CD4-positive, alpha-beta memory T cell (primary cell): ENCODE measurements at regions of chr16 and their contacts with region 1.

Region 1: DNA sequence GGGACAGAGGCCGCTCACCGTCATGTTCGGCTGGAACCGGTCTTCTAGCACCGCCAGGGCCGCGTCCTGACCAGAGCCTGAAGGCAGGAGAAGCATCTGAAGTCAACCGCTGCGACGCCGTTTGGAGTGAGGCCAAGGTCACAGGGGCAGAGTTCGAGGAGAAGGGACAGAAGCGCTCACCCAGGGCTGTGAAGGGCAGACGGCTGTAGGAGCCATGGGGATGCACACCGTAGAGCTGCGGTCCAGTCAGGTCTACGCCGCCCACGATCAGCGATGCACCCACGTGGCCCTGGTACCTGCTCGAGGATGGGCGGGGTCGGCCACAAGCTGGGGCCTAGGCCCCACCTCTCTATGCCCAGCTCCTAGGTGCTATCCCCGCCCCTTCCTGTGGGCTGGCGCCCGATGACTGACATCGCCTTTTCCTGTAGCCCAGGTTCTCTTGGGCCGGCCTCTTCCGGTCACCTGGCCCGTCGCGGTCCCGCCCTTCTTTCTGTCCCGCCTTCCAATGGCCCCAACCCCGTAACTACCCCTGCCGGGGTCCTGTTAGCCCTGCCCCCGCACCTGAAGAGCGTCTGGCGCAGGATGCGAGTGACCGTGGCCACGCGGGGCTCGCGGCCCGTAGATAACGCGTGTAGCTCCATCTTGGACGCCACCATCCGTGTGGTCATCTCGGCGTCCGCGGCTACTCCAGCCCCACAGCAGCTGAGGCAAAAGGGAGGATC is 1.1 kb downstream of the PSMB10 start:
- DNase-seq: peak; percentile 91 to 99 (median 95)
- H3K4me3 ChIP-seq: peak overlapping the region; percentile 81 to 98
- H3K4me3 Mint-ChIP-seq: peak overlapping the region; percentile 96 to 100 (median 99)
- H3K27ac ChIP-seq: peak overlapping the region; percentile 81
- H3K27ac Mint-ChIP-seq: peak overlapping the region; percentile 96 to 99 (median 98)
- H3K4me1 ChIP-seq: peaks cover 35% of the 10 kb centered on the region
- H3K4me1 Mint-ChIP-seq: peaks cover 21 to 50% (median 40%) of the 10 kb centered on the region in 4 donors
- H3K27me3 ChIP-seq: no peaks in the 10 kb centered on the region
- H3K27me3 Mint-ChIP-seq: no peaks in the 10 kb centered on the region

Region 2: DNA sequence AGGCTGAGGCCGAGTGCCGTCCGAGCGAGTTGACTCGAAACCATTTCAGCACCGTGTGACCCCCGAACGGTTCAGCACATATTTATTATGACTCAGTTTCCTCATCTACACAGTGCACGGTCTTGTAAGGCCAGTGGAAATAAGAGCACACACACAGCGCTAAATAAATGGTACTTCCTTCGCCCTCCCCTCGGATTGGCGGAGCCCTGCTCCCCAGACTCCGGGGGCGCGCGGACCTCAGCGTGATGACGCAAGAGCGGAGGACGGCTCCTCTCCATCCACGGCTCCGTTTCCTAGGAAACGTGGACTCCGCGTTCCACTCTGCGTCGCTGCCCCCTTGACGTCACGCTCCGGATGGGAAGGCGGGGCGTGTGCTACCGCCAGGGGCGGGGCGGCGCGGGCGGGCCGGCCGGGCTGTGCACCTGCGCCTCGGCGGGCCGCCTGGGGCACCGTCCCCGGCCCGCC is 275.0 kb before region 1 on chr16 and contains the start of gene PARD6A:
- CTCF ChIA-PET with region 1: no interaction called
- POLR2A ChIA-PET with region 1: interaction called, 10 read pairs
- intact Hi-C with region 1: no loop called
- DNase-seq: peak; percentile 94 to 97 (median 96)
- H3K4me3 ChIP-seq: peak within 1 kb of the TSS; percentile 98 to 100
- H3K4me3 Mint-ChIP-seq: peak within 1 kb of the TSS; percentile 93 to 98 (median 95)
- H3K27ac ChIP-seq: peak within 1 kb of the TSS; percentile 98
- H3K27ac Mint-ChIP-seq: peak within 1 kb of the TSS; percentile 97 to 99 (median 98)
- H3K4me1 ChIP-seq: peaks cover 27% of the 10 kb centered on the region
- H3K4me1 Mint-ChIP-seq: peaks cover 10 to 48% (median 20%) of the 10 kb centered on the region in 4 donors
- H3K27me3 ChIP-seq: no peaks in the 10 kb centered on the region
- H3K27me3 Mint-ChIP-seq: no peaks in the 10 kb centered on the region
- total RNA-seq, gene PARD6A: 7.4 to 8.8 TPM

Region 3: DNA sequence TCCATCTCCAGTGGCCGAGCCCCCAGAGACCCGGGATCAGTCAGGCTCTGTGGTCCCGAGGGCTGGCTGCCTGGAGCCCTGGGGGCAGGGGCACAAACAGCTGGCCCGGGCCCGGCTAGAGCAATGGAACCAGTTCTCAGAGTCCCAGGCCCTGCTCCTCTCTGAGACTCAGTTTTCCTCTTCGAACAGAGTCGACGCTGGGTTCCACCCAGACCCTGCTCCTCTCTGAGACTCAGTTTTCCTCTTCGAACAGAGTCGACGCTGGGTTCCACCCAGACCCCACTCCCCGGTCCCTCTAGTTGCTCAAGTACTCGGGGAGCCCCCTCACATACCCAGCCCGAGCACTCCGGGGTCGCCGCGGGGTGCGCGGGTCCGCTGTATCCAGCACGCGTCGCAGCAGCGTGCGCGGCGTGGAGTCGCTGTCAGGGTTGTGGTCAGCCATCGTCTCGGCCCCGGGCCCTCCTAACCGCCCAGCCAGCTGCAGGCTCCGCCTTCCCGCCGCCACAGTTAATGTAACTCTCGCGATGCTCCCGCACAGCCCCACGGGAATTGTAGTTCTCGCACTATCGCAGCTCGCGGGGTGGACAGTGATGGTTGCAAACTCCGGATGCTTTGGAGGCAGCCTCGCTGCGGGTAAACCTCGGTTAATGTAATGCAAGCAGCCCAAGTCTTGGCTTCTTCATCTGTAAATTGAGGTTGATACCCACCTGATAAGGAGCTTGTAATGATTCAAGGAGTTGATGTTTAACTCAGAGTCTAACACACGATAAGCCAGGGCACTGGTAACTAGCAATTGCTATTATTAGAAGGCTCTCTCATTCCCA is 101.9 kb before region 1 on chr16:
- CTCF ChIA-PET with region 1: interaction called, 6 read pairs
- POLR2A ChIA-PET with region 1: interaction called, 16 read pairs
- intact Hi-C with region 1: no loop called
- DNase-seq: peak; percentile 90 to 94 (median 91)
- H3K4me3 ChIP-seq: peak overlapping the region; percentile 53 to 74
- H3K4me3 Mint-ChIP-seq: peak overlapping the region; percentile 87 to 95 (median 91)
- H3K27ac ChIP-seq: peak overlapping the region; percentile 60
- H3K27ac Mint-ChIP-seq: peak overlapping the region; percentile 80 to 91 (median 85)
- H3K4me1 ChIP-seq: peaks cover 16% of the 10 kb centered on the region
- H3K4me1 Mint-ChIP-seq: peaks cover 10 to 21% (median 15%) of the 10 kb centered on the region in 4 donors
- H3K27me3 ChIP-seq: no peaks in the 10 kb centered on the region
- H3K27me3 Mint-ChIP-seq: no peaks in the 10 kb centered on the region

Region 4: DNA sequence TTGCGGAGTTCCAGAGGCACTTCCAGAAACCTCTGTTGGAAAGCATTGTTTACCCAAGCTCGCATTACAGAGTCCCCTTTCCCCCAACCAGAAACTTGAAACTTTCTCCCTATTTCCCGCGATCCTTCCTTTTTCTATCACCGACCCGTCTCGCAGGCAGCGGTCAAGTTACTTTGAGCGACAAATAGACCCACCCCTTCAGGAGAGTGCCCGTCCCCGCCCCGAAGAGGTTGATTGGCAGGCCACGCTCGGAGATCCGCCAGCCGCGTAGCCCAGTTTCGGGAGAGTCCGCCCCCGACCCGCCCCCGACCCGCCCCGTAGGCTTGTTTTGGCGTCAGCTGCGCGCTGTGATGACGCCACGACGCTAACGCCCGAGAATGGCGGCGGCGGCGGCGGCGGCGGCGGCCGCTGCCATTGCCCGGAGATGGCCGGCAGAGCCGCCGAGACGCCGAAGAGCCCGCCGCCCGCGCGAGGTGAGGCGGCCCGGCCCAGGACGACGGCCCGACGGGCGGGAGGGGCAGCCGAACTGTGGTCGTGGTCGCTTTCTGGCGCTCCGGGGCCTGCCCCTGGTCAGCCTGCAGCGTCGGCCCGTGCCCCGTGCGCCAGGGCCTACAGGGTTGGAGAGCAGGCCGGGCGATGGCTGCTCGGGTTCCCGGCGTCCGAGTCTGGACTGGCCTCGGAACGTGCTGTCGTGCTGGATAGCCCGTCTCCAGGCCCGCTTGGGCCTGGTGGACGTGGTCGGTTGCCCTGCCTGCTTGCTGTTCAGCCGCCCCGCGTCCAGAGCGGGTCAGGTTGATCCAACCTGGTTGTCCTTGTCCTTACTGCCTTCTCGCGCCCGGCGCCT is 42.4 kb before region 1 on chr16 and contains the start of gene PSKH1:
- CTCF ChIA-PET with region 1: no interaction called
- POLR2A ChIA-PET with region 1: interaction called, 28 read pairs
- intact Hi-C with region 1: loop called (anchors 1 kb)
- DNase-seq: peak; percentile 86 to 95 (median 87)
- H3K4me3 ChIP-seq: peak within 1 kb of the TSS; percentile 76 to 90
- H3K4me3 Mint-ChIP-seq: peak within 1 kb of the TSS; percentile 89 to 98 (median 96)
- H3K27ac ChIP-seq: peak within 1 kb of the TSS; percentile 95
- H3K27ac Mint-ChIP-seq: peak within 1 kb of the TSS; percentile 96 to 98 (median 97)
- H3K4me1 ChIP-seq: peaks cover 20% of the 10 kb centered on the region
- H3K4me1 Mint-ChIP-seq: peaks cover 12 to 48% (median 39%) of the 10 kb centered on the region in 4 donors
- H3K27me3 ChIP-seq: no peaks in the 10 kb centered on the region
- H3K27me3 Mint-ChIP-seq: no peaks in the 10 kb centered on the region
- total RNA-seq, gene PSKH1: 22.3 to 25.1 TPM

Region 5: DNA sequence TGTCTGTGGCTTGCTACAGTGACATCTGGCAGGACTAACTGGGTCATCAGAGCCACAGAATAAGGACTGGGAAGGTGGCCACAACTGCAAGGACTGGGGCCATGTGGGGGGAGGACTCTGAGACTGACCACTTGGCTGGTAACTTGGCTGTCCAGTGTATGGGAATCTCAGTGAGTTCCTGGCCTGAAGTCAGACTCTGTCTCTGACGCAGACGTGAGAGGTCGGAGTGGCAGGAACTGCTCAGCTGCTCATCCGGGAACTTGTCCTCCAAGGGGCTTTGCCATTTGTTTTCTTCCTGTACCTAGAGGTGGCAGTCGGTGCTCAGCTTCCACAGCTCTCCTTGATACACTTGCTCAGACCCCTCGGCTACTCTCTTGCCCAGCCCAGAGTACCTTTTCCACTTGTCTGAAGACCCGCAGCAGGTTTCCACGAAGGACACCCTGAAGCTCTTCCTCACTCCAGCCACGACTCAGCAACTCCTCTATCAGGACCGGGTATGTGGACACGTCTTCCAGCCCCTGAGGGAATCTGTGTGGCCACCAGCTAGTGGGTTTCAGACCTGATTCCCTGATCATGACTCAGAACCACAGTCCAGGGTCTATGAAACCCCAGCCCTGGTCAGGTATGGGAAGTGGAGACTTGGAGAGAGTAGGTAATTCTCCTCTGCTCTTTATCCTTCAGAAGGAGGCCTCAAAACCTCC is 52.0 kb after region 1 on chr16:
- CTCF ChIA-PET with region 1: interaction called, 3 read pairs
- POLR2A ChIA-PET with region 1: interaction called, 22 read pairs
- intact Hi-C with region 1: loop called (anchors 2 kb)
- DNase-seq: no peak
- H3K4me3 ChIP-seq: no peak overlapping the region
- H3K4me3 Mint-ChIP-seq: no peak overlapping the region
- H3K27ac ChIP-seq: no peak overlapping the region
- H3K27ac Mint-ChIP-seq: peak overlapping the region; percentile 31 to 84 (median 68)
- H3K4me1 ChIP-seq: peaks cover 27% of the 10 kb centered on the region
- H3K4me1 Mint-ChIP-seq: peaks cover 13 to 35% (median 22%) of the 10 kb centered on the region in 4 donors
- H3K27me3 ChIP-seq: no peaks in the 10 kb centered on the region
- H3K27me3 Mint-ChIP-seq: no peaks in the 10 kb centered on the region

Region 6: DNA sequence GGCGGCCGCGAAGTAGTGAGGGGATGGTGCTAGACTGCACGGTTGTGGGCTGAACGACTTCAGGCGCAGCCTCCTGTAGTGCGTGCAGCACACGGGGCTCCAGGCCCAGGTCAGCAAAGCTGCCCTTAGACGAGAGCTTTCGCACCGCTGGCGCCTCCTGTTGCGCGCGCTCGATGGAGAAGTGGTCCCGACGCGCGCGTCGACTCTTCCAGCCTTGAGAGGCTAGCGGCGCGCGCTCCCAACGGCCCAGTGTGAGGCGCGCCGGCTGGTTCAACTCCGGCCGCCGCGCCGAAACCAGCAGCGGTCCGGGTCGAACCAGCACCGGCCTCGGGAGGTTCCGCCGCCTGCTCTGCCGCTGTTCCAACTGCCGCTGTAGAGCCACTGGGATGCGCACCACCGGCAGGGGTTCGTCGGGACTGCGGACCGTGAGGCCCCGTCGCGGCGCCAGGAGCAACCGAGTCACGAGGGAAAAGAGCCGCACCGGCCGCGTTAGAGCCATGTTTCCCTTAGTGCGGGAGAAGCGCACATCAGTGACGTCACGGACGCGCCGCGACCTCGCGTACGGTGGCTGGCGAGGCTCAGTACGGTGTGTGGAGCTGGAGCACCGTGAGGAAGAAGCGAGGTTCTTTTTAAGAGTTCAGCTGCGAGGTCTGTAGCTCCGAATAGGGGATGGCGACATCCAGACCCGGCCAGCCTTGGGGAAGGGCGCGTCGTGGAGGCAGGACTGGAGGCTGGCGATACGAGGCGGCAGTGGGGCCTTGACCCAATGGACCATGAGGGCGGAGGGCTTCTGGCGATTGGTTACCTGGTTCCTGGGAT is 87.3 kb after region 1 on chr16 and contains the starts of genes DDX28 and DUS2:
- CTCF ChIA-PET with region 1: no interaction called
- POLR2A ChIA-PET with region 1: interaction called, 22 read pairs
- intact Hi-C with region 1: no loop called
- DNase-seq: peak; percentile 92 to 95 (median 92)
- H3K4me3 ChIP-seq: peak within 1 kb of the TSS; percentile 57 to 87
- H3K4me3 Mint-ChIP-seq: peak within 1 kb of the TSS; percentile 93 to 100 (median 97)
- H3K27ac ChIP-seq: peak within 1 kb of the TSS; percentile 84
- H3K27ac Mint-ChIP-seq: peak within 1 kb of the TSS; percentile 91 to 100 (median 99)
- H3K4me1 ChIP-seq: peaks cover 30% of the 10 kb centered on the region
- H3K4me1 Mint-ChIP-seq: peaks cover 10 to 37% (median 28%) of the 10 kb centered on the region in 4 donors
- H3K27me3 ChIP-seq: no peaks in the 10 kb centered on the region
- H3K27me3 Mint-ChIP-seq: peaks cover 1 to 2% of the 10 kb centered on the region in 2 donors
- total RNA-seq, gene DDX28: 16.1 to 17.0 TPM
- total RNA-seq, gene DUS2: 13.8 to 14.6 TPM